Left colon (tissue), 2 donors: ENCODE measurements at regions of chr16 and their contacts with region 1.

Region 1: DNA sequence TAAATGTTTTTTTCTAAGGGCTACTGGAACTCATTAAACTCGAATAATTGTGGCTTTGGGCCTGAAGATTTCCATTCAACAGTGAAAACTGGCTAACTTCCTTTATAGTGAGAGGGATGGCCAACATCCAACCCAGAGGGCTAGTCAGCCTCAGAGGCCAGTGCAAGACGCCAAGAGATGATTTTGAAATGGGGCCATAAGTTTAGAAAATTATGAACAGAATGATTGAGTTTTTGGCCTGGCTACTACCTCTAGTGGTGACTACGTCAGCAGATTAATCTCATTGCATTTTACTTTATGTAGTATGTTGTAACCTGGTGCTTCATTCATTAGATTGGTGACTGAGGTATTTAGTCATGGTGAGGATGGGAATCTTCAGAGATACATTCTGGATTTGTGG is 28.4 kb downstream of the HAPSTR1 start:
- DNase-seq: no peak
- ATAC-seq: no peak

Region 2: GRCh38 chr16:9053006-9053601 is 66.7 kb before region 1 on chr16:
- intact Hi-C with region 1: loop called in 1 of 2 experiments (anchors 10 kb)
- DNase-seq: peak; percentile 30 to 51
- ATAC-seq: peak; percentile 64

Region 3: GRCh38 chr16:9159839-9160550 is 40.2 kb after region 1 on chr16:
- intact Hi-C with region 1: no loop called
- DNase-seq: peak in 1 of 2 donors; percentile 67
- ATAC-seq: peak; percentile 97